Natural killer cell (primary cell): ENCODE measurements at regions of chr1 and their contacts with region 1.

Region 1: GRCh38 chr1:228416217-228416933 is at the start of gene TRIM17:
- DNase-seq: peak; percentile 33 to 60
- ATAC-seq: peak; percentile 70 to 85 (median 83)
- H3K4me3 ChIP-seq: peak within 1 kb of the TSS; percentile 42
- H3K4me3 Mint-ChIP-seq: peak within 1 kb of the TSS; percentile 99
- H3K27ac ChIP-seq: no peak within 1 kb of the TSS
- H3K27ac Mint-ChIP-seq: peak within 1 kb of the TSS in 1 of 2 donors; percentile 86
- H3K4me1 ChIP-seq: peaks cover 17% of the 10 kb centered on the region
- H3K4me1 Mint-ChIP-seq: peaks cover 15 to 30% of the 10 kb centered on the region in 2 donors
- H3K27me3 ChIP-seq: peaks cover 4% of the 10 kb centered on the region
- H3K27me3 Mint-ChIP-seq: peaks cover 0 to 7% of the 10 kb centered on the region in 2 donors
- CTCF ChIP-seq: no peak
- total RNA-seq, gene TRIM17: 8.0 to 13.4 (median 8.4) TPM

Region 2: DNA sequence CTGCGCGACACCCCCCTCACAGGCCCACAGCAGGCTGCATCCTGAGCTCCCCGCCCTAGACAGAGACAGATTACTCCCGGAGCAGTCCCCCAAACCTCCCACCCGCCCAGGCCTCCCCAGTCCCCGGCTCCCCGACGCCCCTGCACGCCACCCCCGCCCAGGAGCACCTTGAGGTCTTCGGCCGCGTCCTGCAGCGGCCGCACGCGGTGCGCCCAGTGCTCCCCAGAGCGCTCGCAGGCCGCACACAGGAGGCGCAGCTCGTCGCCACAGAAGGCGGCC is 10.4 kb before region 1 on chr1:
- intact Hi-C with region 1: loop called (anchors 1 kb)
- DNase-seq: no peak
- ATAC-seq: peak in 2 of 3 donors; percentile 1 to 22
- H3K4me3 ChIP-seq: peak overlapping the region; percentile 82
- H3K4me3 Mint-ChIP-seq: peak overlapping the region; percentile 93
- H3K27ac ChIP-seq: no peak overlapping the region
- H3K27ac Mint-ChIP-seq: peak overlapping the region; percentile 75 to 89
- H3K4me1 ChIP-seq: peaks cover 57% of the 10 kb centered on the region
- H3K4me1 Mint-ChIP-seq: peaks cover 56 to 71% of the 10 kb centered on the region in 2 donors
- H3K27me3 ChIP-seq: no peaks in the 10 kb centered on the region
- H3K27me3 Mint-ChIP-seq: no peaks in the 10 kb centered on the region
- CTCF ChIP-seq: no peak